Posterior vena cava (tissue), 2 donors: ENCODE measurements at regions of chr15 and their contacts with region 1.

Region 1: GRCh38 chr15:101501703-101502373 is 12.3 kb upstream of the PCSK6 start:
- DNase-seq: peak; percentile 79

Region 2: DNA sequence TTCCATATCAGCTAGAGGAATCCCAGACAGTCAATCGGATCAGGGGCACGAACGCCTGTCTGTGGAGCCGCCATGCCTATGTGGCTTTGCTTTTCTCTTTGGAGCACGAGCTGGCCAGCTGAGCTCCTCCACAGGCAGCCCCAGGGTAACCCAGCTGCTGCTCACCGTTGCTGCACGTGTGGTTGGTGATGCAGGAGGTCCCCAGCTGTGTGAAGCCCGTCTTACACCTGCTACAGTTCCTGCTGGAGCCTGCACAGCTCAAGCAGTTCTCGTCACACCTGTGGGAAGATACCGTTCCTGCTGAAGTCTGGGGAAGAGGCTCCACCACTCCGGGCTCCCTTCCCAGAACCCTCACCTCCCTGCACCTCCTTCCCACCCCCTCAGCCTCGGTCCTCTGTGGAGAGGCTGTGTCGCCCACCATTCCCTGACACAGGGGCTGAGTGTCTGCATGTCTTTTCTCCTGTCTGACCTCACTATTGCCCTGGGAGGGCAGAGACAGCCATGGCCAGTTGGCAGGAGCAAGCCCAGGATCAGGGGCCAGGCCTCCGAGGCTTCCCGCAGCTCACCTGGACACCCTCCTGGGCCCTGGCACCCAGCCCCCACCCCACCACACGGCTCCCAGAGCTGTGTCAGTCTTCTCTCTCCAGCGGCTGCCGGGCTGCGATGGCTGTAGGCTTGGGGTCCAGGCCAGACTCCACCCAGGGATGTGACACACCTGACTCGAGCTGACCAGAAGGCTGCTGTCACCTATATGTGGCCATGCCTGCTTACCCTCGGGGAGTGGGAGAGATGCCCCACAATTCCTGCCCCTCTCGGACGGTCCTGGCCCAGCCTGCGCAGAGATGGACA is 194.6 kb before region 1 on chr15:
- intact Hi-C with region 1: loop called in 1 of 2 experiments (anchors 10 kb)
- DNase-seq: peak; percentile 71